ENCODE measurements at regions of chr10 and their contacts with region 1.

Region 1: GRCh38 chr10:122655524-122656307 is 43.9 kb downstream of the C10orf120 start:
- DNase-seq: no peak
- ATAC-seq: no peak
- H3K4me3 ChIP-seq: no peak overlapping the region
- H3K27ac ChIP-seq: no peak overlapping the region
- H3K4me1 ChIP-seq: no peaks in the 10 kb centered on the region
- H3K27me3 ChIP-seq: no peaks in the 10 kb centered on the region
- CTCF ChIP-seq: no peak
- POLR2A ChIP-seq: no peak
- RAD21 ChIP-seq: no peak

Region 2: GRCh38 chr10:123559066-123559822 is 903.5 kb after region 1 on chr10:
- CTCF ChIA-PET with region 1: no interaction called
- POLR2A ChIA-PET with region 1: no interaction called
- dilution Hi-C with region 1: no loop called
- in situ Hi-C with region 1: loop called (anchors 25 kb)
- intact Hi-C with region 1: no loop called
- DNase-seq: peak; percentile 31
- ATAC-seq: peak; percentile 98
- H3K4me3 ChIP-seq: no peak overlapping the region
- H3K27ac ChIP-seq: no peak overlapping the region
- H3K4me1 ChIP-seq: no peaks in the 10 kb centered on the region
- H3K27me3 ChIP-seq: no peaks in the 10 kb centered on the region
- CTCF ChIP-seq: peak; percentile 94
- POLR2A ChIP-seq: no peak; the same call in 1 of the 2 replicates
- RAD21 ChIP-seq: peak; percentile 94

Measured in IMR-90 (cell line).